Activated B cell treated with CpG ODN at 0.5 μM for 24 hours (primary cell): ENCODE measurements at regions of chr19 and their contacts with region 1.

Region 1: DNA sequence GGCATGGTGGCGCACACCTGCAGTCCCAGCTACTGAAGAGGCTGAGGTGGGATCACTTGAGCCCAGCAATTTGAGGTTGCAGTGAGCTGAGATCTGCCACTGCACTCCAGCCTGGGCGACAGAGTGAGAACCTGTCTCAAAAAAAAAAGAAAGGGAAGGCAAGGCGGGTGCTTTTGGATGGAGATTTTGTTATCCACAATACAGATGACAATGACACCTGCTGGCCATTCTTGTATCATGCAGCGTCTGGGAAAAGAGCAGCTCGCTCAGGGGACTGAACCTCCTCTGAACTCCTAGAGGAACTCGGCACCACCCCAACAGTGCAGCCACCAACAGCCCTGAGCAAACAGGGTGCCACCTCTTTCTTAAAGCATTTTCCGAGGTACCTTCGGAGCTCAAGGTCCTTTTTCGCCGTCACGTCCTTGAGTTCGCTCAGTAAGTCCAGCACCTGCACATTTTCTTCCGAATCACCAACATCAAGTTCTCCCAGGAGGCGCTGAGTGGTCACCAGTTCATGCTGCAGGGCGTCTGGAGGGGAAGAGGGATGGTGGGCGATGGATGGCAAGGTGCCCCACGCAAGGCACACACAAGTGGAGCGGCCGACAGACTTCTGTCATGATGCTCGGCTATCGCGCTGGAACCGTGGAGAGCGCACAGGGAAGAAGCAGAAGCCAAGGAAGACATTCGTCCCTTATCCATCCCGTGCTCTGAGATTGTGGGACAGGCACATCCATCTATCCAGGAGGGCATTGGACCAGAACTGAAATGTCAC is 22.6 kb downstream of the HAUS8 start:
- DNase-seq: no peak
- ATAC-seq: peak; percentile 28
- H3K4me3 Mint-ChIP-seq: no peak overlapping the region
- H3K27ac Mint-ChIP-seq: no peak overlapping the region
- H3K4me1 Mint-ChIP-seq: no peaks in the 10 kb centered on the region
- H3K27me3 Mint-ChIP-seq: no peaks in the 10 kb centered on the region
- CTCF ChIP-seq: no peak

Region 2: GRCh38 chr19:16714702-16715287 is 337.8 kb before region 1 on chr19:
- CTCF ChIA-PET with region 1: interaction called, 16 read pairs
- POLR2A ChIA-PET with region 1: interaction called, 9 read pairs
- intact Hi-C with region 1: loop called (anchors 1 kb)
- DNase-seq: peak; percentile 47
- ATAC-seq: peak; percentile 20
- H3K4me3 Mint-ChIP-seq: peak overlapping the region; percentile 42
- H3K27ac Mint-ChIP-seq: peak overlapping the region; percentile 81
- H3K4me1 Mint-ChIP-seq: peaks cover 54% of the 10 kb centered on the region
- H3K27me3 Mint-ChIP-seq: no peaks in the 10 kb centered on the region
- CTCF ChIP-seq: peak; percentile 94

Region 3: GRCh38 chr19:16778796-16779411 is 273.7 kb before region 1 on chr19:
- CTCF ChIA-PET with region 1: interaction called, 12 read pairs
- POLR2A ChIA-PET with region 1: no interaction called
- intact Hi-C with region 1: loop called (anchors 1 kb)
- DNase-seq: no peak
- ATAC-seq: peak; percentile 61
- H3K4me3 Mint-ChIP-seq: no peak overlapping the region
- H3K27ac Mint-ChIP-seq: no peak overlapping the region
- H3K4me1 Mint-ChIP-seq: no peaks in the 10 kb centered on the region
- H3K27me3 Mint-ChIP-seq: no peaks in the 10 kb centered on the region
- CTCF ChIP-seq: no peak

Region 4: DNA sequence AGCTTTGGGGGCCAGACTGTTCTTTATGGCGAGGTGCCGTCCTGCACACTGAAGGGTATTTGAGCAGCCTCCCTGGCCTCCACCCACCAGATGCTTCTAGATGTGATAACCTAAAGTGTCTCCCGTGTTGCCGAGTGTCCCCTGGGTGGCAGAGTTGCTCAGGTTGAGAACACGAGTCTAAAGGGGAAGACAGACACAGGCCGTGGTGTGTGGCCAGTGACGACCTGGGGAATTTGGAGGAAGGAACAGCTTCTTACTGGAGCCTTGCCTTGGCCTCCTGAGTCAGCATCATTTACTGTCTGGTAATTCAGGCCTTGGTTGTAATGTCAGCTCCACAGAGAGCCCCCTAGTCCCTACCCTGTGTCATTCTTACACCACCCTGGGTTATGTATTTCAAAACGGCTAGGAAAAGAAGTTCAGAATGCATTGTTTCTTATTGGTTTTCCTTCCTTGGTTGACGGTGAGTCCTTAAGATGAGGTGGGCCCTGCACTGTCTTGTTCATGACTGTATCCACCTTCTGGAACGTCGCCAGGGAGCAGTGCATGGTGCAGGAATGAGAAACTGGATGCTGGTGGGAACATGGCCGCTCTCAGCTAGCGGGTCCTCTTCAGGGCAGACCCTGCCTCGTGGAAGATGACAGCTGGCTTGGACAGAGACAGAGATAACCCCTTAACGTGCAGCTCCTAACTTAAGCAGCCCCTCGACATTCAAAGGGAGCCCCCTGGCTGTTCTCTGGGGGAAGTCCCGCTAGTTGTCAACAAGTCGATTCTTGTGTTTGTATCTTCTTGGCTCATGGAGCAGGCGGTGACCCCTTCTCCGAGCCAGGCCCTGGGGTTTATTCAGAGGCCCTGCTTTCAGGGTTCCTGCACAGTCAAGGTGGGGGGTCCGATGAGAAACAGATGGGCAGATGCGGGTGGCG is 216.2 kb before region 1 on chr19:
- CTCF ChIA-PET with region 1: interaction called, 16 read pairs
- POLR2A ChIA-PET with region 1: no interaction called
- intact Hi-C with region 1: loop called (anchors 1 kb)
- DNase-seq: peak; percentile 29
- ATAC-seq: peak; percentile 81
- H3K4me3 Mint-ChIP-seq: no peak overlapping the region
- H3K27ac Mint-ChIP-seq: peak overlapping the region; percentile 80
- H3K4me1 Mint-ChIP-seq: peaks cover 42% of the 10 kb centered on the region
- H3K27me3 Mint-ChIP-seq: no peaks in the 10 kb centered on the region
- CTCF ChIP-seq: no peak

Region 5: DNA sequence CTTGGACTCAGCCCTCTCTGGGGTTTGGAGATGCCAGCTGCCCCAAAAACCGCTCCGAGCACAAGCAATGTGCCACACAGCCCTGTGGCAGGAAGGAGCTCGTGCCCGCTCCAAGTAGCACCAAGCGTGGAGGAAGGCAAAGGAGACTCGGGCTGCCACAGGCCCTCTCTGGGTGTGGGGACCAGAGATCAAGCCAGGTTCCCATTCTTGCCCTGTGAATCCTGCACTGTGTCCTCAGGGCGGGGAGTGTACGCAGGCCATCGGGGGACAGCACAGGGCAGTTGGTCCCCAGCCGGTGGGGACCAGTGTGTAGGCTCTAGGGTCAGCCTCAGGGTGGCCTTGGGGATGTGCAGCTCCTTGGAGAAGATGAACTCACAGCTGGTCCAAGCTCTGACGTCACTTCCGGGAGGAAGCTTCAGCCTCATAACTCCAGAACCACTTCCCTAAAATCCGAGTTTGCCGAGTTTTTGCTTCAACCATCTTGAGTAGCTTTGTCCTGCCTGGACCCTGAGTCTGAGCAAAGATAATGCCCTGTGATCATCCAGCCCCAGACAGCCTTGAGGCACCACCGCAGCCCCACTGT is 16.7 kb before region 1 on chr19:
- CTCF ChIA-PET with region 1: no interaction called
- POLR2A ChIA-PET with region 1: no interaction called
- intact Hi-C with region 1: no loop called
- DNase-seq: no peak
- ATAC-seq: no peak
- H3K4me3 Mint-ChIP-seq: no peak overlapping the region
- H3K27ac Mint-ChIP-seq: no peak overlapping the region
- H3K4me1 Mint-ChIP-seq: no peaks in the 10 kb centered on the region
- H3K27me3 Mint-ChIP-seq: peaks cover 17% of the 10 kb centered on the region
- CTCF ChIP-seq: no peak